Activated CD8-positive, alpha-beta T cell treated with anti-CD3 and anti-CD28 coated beads, Interleukin-2, amount 10 ng/mL, durations not matched to agents 7 days and 5 days (primary cell): ENCODE measurements at regions of chr1 and their contacts with region 1.

Region 1: DNA sequence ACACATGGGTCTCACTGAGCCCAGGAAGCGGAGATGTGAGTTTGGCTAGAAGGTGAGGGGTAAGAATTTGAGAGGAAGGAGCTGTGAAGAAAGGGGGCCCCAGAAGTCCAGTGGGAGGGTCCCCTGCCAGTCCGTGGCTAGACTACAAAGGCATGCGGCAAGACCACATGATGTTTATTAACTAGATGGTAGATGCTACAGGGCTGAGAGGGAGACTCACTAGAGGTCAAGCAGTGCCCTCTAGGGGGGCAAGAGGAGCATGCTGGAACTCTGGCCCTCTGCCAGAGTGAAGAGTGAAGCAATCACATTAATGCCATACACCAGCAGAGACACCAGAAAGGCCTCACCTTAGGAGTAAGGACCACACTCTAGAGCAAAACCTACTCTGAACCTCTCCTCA is 12.2 kb downstream of the KIAA0319L start:
- DNase-seq: peak; percentile 70
- ATAC-seq: peak; percentile 89
- H3K4me3 Mint-ChIP-seq: no peak overlapping the region
- H3K27ac Mint-ChIP-seq: no peak overlapping the region
- H3K4me1 Mint-ChIP-seq: peaks cover 28% of the 10 kb centered on the region
- H3K27me3 Mint-ChIP-seq: no peaks in the 10 kb centered on the region

Region 2: DNA sequence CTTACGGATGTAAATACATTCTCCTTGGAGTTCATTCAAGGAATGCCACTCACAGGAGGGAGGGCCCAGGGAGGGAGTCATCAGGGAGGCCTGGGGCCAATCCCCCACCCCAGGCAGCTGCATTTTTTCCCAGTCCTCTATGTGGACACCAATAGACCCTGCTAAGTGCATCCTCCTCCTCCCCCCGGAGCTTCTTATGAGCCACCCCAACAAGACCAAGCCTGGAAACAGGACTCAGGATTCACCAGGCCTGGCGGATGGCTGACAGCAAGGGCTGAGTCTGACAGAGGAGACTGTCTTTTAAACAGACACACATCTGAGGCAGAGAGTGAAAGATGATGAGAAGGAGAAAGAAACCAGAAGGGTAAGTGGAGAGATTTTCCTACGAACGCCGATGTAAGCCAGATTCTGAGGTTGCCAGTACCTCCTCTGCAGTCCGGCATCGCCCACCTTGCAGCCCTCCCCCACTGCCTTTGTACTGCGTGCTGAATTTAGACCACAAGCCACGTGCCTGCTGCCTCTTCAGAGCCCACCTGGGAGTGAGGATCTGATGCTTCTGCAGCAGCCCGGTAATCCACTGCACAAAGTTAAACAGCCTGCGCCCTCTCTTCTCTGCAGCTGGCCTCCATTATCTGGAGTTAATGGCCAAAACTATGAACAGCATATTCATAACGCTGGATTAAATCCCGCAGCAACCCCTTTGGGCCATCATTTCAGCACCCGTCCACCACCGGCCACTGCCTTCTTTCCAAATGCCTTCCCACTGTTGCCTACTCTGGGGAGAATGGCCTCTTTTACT is 334.5 kb before region 1 on chr1:
- CTCF ChIA-PET with region 1: no interaction called
- POLR2A ChIA-PET with region 1: no interaction called
- DNase-seq: no peak
- ATAC-seq: no peak
- H3K4me3 Mint-ChIP-seq: no peak overlapping the region
- H3K27ac Mint-ChIP-seq: no peak overlapping the region
- H3K4me1 Mint-ChIP-seq: no peaks in the 10 kb centered on the region
- H3K27me3 Mint-ChIP-seq: peaks cover 4% of the 10 kb centered on the region

Region 3: GRCh38 chr1:35443768-35444518 is 101.0 kb before region 1 on chr1:
- CTCF ChIA-PET with region 1: interaction called, 215 read pairs
- POLR2A ChIA-PET with region 1: no interaction called
- DNase-seq: no peak
- ATAC-seq: no peak
- H3K4me3 Mint-ChIP-seq: no peak overlapping the region
- H3K27ac Mint-ChIP-seq: no peak overlapping the region
- H3K4me1 Mint-ChIP-seq: peaks cover 10% of the 10 kb centered on the region
- H3K27me3 Mint-ChIP-seq: no peaks in the 10 kb centered on the region

Region 4: GRCh38 chr1:35683012-35683411 is 138.0 kb after region 1 on chr1:
- CTCF ChIA-PET with region 1: no interaction called
- POLR2A ChIA-PET with region 1: no interaction called
- DNase-seq: no peak
- ATAC-seq: no peak
- H3K4me3 Mint-ChIP-seq: no peak overlapping the region
- H3K27ac Mint-ChIP-seq: no peak overlapping the region
- H3K4me1 Mint-ChIP-seq: no peaks in the 10 kb centered on the region
- H3K27me3 Mint-ChIP-seq: peaks cover 29% of the 10 kb centered on the region